Psoas muscle (tissue), 8 donors: ENCODE measurements at regions of chr16 and their contacts with region 1.

Region 1: DNA sequence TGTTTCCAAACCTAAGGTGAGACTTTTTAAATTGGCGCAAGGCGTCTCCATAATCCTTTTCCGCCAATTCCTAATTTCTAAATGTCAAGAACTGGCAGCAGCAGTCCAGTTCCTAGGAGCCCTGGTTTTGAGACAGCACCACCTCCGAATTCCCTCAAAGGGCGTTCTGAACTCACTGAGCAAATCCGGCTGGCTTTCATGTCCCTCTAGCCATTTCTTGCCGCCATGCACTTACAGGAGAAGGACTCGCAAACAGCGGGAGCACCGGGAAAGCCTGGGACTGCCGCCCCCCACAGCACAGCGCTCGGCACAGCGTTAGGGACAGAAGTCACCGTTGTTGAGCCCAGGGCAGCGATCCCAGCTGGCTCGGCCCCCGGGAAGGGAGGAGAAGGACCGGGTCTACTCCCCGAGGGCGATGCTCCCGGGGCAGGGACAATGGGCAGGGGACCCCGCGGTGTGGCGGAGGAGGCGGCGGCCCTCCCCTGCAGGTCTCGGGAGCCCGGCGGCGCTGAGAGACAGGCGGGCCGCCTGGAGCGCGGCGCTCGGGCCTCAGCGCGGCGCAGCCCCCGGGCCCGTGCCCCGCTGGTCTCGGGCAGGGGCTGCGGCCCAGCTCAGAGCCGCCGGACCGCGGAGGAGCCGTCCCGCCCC is 545 bp downstream of the ARHGAP17 start:
- DNase-seq: peak; percentile 51 to 71
- ATAC-seq: peak; percentile 48 to 63 (median 57)
- H3K4me3 ChIP-seq: peak overlapping the region; percentile 76
- H3K27ac ChIP-seq: peak overlapping the region; percentile 95
- H3K4me1 ChIP-seq: peaks cover 42% of the 10 kb centered on the region
- H3K27me3 ChIP-seq: no peaks in the 10 kb centered on the region
- CTCF ChIP-seq: no peak

Region 2: DNA sequence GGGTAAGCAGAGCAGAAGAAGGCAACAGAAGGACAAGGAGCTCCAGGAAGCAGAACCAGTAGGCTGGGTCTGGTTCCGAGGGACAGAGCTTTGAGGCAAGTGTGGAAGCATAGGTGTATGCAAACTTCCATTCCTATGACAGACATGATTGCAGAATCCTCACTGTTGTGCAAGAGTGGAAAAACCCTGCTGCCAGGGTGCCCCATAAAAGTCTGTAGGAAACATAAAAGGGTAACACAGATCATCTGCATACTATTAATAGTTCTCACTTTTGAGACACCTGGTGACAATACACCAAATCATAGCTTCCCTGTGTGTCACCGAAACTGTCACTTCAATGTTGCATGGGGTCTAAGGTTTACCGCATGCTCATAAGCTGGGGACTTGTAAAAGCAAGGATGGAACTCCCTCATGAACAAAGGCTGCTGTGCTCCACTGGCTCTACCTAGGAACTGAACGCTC is 39.2 kb before region 1 on chr16:
- intact Hi-C with region 1: loop called (anchors 5 kb)
- DNase-seq: no peak
- ATAC-seq: peak; percentile 43 to 67 (median 62)
- H3K4me3 ChIP-seq: no peak overlapping the region
- H3K27ac ChIP-seq: peak overlapping the region; percentile 67
- H3K4me1 ChIP-seq: peaks cover 51% of the 10 kb centered on the region
- H3K27me3 ChIP-seq: no peaks in the 10 kb centered on the region
- CTCF ChIP-seq: no peak